ENCODE measurements at regions of chr11 and their contacts with region 1.

Region 1: DNA sequence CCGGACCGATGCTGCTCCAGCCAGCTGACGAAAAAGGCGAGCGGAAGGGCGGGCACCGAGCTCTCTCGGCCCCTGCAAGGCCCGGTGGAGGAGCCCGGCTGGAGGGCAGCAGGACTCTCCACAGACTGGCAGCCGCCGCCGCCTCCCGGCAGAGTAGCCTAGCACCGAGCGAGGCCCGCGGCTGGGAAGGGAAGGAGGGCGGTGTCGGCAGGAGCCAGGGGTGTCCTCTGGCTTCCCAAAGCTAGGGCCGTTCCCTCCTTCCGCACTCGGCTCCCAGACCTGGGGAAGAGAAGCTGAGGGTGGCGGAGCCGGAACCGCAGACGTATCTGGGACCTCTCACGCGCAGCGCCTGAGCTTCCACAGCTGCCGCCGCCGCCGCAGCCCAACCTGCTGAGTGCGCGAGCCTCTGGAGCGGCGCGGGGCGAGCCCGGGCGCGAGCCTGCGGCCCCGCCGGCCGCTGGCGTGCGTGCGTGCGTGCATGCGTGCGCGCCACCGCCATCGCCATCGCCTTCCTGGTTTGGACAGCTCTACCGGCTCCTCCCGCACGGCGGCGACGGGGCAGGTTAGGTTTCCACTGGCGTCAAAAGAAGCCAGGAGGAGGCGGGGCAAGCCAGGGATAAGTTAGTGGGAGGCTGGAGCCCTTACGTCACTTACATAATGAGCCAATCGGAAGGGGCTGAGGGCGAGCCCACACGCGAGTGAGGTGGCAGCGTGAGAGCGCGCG is at the start of gene RAB6A:
- DNase-seq: peak; percentile 100
- ATAC-seq: peak; percentile 98
- total RNA-seq, gene RAB6A: 157 TPM

Region 2: GRCh38 chr11:74726547-74727182 is 965.8 kb after region 1 on chr11:
- intact Hi-C with region 1: loop called (anchors 5 kb)
- DNase-seq: peak; percentile 84
- ATAC-seq: peak; percentile 96

Measured in sciatic nerve (tissue), 2 donors.